ENCODE measurements at regions of chr16 and their contacts with region 1.

Region 1: GRCh38 chr16:49921791-49922456 is 66.0 kb upstream of the ZNF423 start:
- DNase-seq: peak; percentile 83 to 88
- H3K4me3 ChIP-seq: no peak overlapping the region
- H3K4me3 Mint-ChIP-seq: no peak overlapping the region
- H3K27ac Mint-ChIP-seq: no peak overlapping the region
- H3K4me1 ChIP-seq: 0 out of 2 replicates have a peak, but pooled peaks cover 3% of the 10 kb centered on the region
- H3K4me1 Mint-ChIP-seq: no peaks in the 10 kb centered on the region
- H3K27me3 ChIP-seq: no peaks in the 10 kb centered on the region
- H3K27me3 Mint-ChIP-seq: peaks cover 8% of the 10 kb centered on the region
- CTCF ChIP-seq: peak; percentile 90 to 93

Region 2: DNA sequence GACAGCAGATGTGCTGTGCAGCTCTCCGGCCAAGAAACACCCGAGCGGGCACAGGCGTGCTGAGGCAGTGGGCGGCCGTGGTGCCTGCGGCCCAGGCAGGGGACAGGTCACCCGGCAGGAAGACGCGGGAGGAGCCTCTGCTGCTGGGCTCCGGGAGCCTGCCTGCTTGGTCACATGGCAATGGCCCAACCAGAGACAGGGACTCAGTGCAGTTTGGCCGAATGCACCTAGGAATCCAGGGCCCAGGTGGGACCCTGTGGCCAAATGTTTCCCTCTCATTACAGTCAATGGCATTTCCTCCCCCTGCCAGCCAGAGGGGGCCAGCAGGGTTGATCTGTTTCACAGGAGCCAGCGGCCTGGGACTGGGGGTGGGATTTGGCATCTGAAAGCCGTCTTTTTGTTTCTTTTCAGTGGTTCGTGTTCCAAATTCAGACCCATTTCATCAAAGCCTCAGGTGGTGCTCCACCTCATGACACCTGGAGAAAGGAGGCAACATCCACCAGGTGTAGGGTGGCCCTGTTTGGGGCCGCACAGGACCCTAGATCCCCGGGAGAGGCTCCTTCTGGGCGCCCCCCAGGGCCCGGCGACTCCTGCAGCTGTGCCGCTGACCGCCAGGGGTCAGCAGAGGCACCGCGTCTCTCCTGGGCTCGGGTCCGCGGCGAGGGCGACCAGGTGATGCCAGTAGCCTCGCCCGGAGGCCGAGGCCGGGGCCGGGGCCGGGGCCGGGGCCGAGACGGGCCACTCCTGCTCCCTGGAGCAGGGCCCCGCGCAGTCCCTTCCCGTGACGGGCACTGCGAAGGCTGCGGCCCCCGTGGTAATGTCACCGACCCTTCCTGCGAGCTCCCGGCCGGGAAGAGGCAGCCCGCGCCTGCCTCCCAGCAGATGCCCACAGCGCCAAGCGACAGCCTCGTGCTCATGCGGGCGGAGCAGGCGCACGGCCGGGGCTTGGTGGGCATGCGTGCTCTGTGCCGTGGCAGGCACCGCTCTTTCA is 429.9 kb before region 1 on chr16:
- CTCF ChIA-PET with region 1: no interaction called
- POLR2A ChIA-PET with region 1: no interaction called
- intact Hi-C with region 1: loop called (anchors 5 kb)
- DNase-seq: peak in 1 of 2 experiments; percentile 61
- H3K4me3 ChIP-seq: no peak overlapping the region
- H3K4me3 Mint-ChIP-seq: no peak overlapping the region
- H3K27ac Mint-ChIP-seq: no peak overlapping the region
- H3K4me1 ChIP-seq: no peaks in the 10 kb centered on the region; the same call in 1 of the 2 replicates
- H3K4me1 Mint-ChIP-seq: no peaks in the 10 kb centered on the region
- H3K27me3 ChIP-seq: peaks cover 3% of the 10 kb centered on the region; the same call in 1 of the 2 replicates
- H3K27me3 Mint-ChIP-seq: peaks cover 16% of the 10 kb centered on the region
- CTCF ChIP-seq: peak; percentile 90

Region 3: DNA sequence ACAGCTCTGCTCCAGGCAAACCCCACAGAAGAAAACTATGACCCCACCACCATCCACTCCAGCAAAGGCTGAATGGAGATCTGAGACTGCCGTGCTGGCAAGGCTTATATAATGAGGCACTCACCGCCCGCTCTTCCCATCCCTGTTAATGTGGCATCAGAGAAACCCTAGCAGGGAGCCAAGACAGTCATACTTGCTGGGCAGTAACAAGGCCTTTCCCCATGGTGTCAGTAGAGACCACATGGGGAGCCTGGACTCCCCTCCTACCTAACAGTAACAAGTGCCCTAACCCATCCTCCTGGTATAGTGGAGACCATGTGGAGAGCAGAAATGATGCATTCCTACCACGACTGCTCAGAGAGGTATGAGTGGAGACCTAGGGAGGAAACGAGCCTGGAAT is 313.1 kb before region 1 on chr16:
- CTCF ChIA-PET with region 1: no interaction called
- POLR2A ChIA-PET with region 1: no interaction called
- intact Hi-C with region 1: loop called (anchors 2 kb)
- DNase-seq: peak; percentile 35 to 38
- H3K4me3 ChIP-seq: no peak overlapping the region
- H3K4me3 Mint-ChIP-seq: no peak overlapping the region
- H3K27ac Mint-ChIP-seq: no peak overlapping the region
- H3K4me1 ChIP-seq: no peaks in the 10 kb centered on the region
- H3K4me1 Mint-ChIP-seq: no peaks in the 10 kb centered on the region
- H3K27me3 ChIP-seq: no peaks in the 10 kb centered on the region; the same call in 1 of the 2 replicates
- H3K27me3 Mint-ChIP-seq: peaks cover 38% of the 10 kb centered on the region
- CTCF ChIP-seq: peak; percentile 28 to 71

Region 4: DNA sequence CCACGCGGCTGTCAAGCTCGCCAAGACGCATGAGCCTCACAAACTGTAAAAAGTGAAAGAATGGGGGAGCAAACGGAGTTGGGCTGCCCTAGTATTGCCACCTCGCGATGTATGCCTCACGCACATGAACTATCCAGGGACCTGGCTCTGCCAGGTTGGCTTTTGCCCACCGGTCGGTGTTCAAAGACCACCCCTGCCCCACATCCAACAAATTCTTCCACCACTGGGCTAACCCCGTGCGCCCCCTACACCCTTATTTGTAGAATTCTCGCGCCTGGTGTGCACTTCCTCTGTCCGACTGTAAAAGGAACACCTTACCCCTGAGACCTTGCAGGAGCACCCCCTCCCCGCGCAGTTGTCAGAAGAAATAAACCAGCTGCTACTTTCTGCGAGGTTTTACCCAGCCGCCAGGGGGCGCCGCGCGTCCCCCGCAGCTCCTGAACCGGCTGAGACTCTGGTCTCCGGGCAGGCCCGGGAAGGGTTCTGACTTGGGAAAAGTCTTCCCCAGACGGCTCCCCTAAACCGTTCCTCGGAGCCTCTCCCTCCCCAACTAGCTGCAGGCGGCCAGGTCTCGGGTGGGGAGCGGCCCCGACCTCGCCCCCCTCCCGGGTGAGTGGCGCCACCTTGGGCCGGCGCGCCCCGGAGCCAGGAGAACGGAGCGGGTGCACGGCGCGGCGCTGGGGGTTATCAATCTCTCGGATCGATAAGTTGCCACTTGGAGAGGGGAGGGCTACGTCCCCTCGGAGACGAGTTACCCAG is 64.3 kb before region 1 on chr16:
- CTCF ChIA-PET with region 1: interaction called, 91 read pairs
- POLR2A ChIA-PET with region 1: no interaction called
- intact Hi-C with region 1: loop called (anchors 1 kb)
- DNase-seq: peak; percentile 75 to 83
- H3K4me3 ChIP-seq: peak overlapping the region; percentile 30
- H3K4me3 Mint-ChIP-seq: peak overlapping the region; percentile 86
- H3K27ac Mint-ChIP-seq: no peak overlapping the region
- H3K4me1 ChIP-seq: peaks cover 30% of the 10 kb centered on the region
- H3K4me1 Mint-ChIP-seq: peaks cover 14% of the 10 kb centered on the region
- H3K27me3 ChIP-seq: peaks cover 6% of the 10 kb centered on the region
- H3K27me3 Mint-ChIP-seq: peaks cover 25% of the 10 kb centered on the region
- CTCF ChIP-seq: peak; percentile 92 to 96